ENCODE measurements at regions of chr1 and their contacts with region 1.

Region 1: DNA sequence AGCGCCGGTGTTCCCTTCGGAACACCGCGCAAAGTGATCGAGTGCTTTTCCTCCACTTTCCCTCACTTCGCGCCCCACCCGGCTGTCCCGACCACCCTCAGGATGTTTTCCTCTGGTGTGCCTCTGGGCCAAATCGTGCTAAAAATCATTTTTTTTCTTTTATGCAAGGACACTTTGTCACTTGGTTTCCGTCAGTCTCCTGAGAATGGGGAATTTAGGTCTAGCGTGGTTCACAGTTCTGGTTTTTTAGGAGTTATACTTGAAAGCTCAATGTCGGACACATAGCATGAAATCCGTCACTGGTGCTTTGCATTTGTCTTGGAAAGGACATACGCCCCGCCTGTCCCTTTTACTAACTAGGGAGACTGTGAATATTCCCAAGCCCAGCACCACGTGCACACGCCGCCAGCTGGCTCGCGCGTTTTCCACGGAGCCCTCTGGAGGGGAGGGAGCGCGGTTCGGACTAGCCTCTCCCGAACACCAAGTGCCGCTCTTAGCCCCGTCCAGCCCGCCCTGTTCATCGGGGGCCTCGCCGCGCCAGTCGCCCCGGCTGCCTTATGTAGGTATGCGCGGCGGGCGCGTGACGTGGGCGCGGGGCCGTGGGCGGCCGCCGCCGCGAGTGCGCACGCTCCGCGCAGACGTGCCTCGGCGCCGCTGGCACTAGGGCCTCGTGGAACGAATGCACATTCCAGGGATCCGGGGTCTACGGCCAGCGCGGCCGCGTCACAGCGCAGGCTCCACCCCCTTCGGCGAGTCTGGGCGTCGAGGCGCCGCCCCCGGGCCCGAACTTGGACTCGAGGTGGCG is 572 bp upstream of the IRF2BP2 start:
- DNase-seq: peak; percentile 93
- H3K4me3 ChIP-seq: peak overlapping the region; percentile 58
- H3K27ac ChIP-seq: peak overlapping the region; percentile 95
- H3K27me3 ChIP-seq: no peaks in the 10 kb centered on the region
- CTCF ChIP-seq: peak; percentile 19

Region 2: GRCh38 chr1:233790662-233791375 is 819.7 kb before region 1 on chr1:
- in situ Hi-C with region 1: no loop called
- DNase-seq: peak; percentile 2
- H3K4me3 ChIP-seq: no peak overlapping the region
- H3K27ac ChIP-seq: no peak overlapping the region
- H3K27me3 ChIP-seq: no peaks in the 10 kb centered on the region
- CTCF ChIP-seq: peak; percentile 87

Region 3: GRCh38 chr1:234963180-234963903 is 352.8 kb after region 1 on chr1:
- in situ Hi-C with region 1: loop called (anchors 25 kb)
- DNase-seq: peak; percentile 97
- H3K4me3 ChIP-seq: no peak overlapping the region
- H3K27ac ChIP-seq: peak overlapping the region; percentile 100
- H3K27me3 ChIP-seq: no peaks in the 10 kb centered on the region
- CTCF ChIP-seq: no peak